HEK293T (cell line): ENCODE measurements at regions of chr14 and their contacts with region 1.

Region 1: DNA sequence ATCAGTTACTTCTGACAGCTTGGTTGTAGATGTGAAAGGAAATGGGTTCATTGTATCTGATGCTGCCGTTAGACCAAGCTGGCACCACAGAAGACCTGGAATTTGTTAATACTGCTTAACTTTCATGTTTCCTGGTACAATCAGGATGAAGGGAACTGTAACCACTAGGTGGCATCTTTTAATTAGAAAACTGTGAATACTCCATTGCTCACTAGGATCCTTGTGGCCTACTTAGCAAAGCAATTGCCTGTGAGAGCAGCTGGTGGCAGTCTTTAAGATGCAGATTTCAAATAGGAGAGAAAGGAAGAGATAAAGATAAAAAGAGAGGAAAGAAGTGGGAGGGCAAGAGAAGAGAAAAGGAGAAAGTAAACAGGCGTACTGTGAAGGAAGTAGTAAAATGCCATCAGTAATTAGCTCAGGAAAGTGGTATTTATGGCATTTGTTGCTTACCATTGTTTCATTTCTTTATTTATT is 114.5 kb downstream of the RAD51B start:
- DNase-seq: peak; percentile 59

Region 2: DNA sequence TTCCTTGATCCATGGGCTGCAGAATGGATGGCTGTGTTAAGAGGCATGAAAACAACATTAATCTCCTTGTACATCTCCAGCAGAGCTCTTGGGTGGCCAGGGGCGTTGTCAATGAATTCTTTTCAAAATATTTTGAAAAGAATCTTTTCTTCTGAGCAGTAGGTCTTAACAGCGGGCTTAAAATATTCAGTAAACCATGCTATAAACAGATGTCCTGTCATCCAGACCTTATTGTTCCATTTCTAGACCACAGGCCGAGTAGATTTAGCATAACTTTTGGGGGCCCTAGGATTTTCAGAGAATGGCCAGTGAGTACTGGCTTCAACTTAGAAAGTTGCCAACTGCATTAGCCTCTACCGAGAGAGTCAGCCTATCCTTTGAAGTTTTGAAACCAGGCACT is 15.7 kb after region 1 on chr14:
- CTCF ChIA-PET with region 1: no interaction called
- POLR2A ChIA-PET with region 1: no interaction called
- DNase-seq: no peak

Region 3: GRCh38 chr14:68188174-68188573 is 254.1 kb after region 1 on chr14:
- CTCF ChIA-PET with region 1: no interaction called
- POLR2A ChIA-PET with region 1: no interaction called
- DNase-seq: no peak

Region 4: GRCh38 chr14:68816262-68816942 is 882.4 kb after region 1 on chr14:
- CTCF ChIA-PET with region 1: interaction called, 13 read pairs
- POLR2A ChIA-PET with region 1: no interaction called
- DNase-seq: peak; percentile 90